ENCODE measurements at regions of chr18 and their contacts with region 1.

Region 1: DNA sequence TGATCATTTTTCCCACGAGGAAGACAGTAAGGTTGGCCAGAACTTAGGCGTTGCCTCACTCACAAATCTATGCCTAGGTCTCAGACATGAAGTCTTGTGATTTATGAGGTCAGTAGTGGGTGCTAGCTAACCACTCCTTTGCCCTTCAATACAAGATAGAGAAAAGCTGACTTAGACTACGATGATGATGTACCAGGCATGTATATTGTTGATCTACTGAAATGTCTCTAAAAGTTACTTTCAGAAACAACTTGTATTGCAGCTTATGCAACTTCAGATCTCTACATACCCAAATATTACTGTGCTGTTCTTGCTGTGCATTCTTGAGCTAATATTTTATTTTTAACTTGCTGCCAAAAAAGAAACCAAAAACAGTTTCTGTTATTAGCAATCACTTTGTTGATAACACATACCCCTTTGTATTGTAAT is 30.6 kb downstream of the MAPRE2 start:
- DNase-seq: no peak
- ATAC-seq: no peak
- H3K4me3 ChIP-seq: no peak overlapping the region
- H3K4me3 Mint-ChIP-seq: no peak overlapping the region
- H3K27ac ChIP-seq: peak overlapping the region in 1 of 2 donors; percentile 65
- H3K27ac Mint-ChIP-seq: peak overlapping the region; percentile 42
- H3K4me1 ChIP-seq: peaks cover 10 to 17% of the 10 kb centered on the region in 2 donors
- H3K4me1 Mint-ChIP-seq: peaks cover 53% of the 10 kb centered on the region
- H3K27me3 ChIP-seq: no peaks in the 10 kb centered on the region
- H3K27me3 Mint-ChIP-seq: no peaks in the 10 kb centered on the region
- CTCF ChIP-seq: no peak

Region 2: DNA sequence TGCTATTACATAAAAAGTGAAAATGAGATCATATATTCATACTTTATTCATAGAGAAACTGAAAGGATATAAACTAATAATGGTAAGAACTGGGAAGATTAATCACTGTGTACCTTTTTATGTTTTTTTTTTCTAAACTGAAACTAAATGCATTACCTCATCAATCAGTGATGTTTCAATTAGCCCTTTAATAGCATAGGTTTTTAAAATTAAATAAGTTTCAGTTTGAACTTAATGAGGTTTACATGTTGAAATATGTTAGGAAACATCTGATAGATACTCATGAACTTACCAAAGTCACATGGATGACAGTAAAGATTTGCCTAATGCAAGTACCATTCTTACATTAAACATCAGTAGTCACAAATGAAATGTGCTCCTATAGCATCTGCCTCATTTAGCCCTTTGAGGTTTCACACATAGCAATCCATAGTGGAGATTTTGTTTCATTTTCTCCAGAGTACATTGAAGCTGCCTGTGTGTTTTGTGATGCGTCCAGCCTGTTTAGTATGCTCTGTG is 21.7 kb before region 1 on chr18:
- CTCF ChIA-PET with region 1: no interaction called
- POLR2A ChIA-PET with region 1: no interaction called
- intact Hi-C with region 1: loop called (anchors 1 kb)
- DNase-seq: no peak
- ATAC-seq: peak; percentile 31
- H3K4me3 ChIP-seq: peak overlapping the region in 3 of 5 experiments; percentile 21 to 57 (median 27)
- H3K4me3 Mint-ChIP-seq: peak overlapping the region; percentile 83
- H3K27ac ChIP-seq: peak overlapping the region; percentile 85 to 87
- H3K27ac Mint-ChIP-seq: peak overlapping the region; percentile 88
- H3K4me1 ChIP-seq: peaks cover 50 to 55% of the 10 kb centered on the region in 2 donors
- H3K4me1 Mint-ChIP-seq: peaks cover 79% of the 10 kb centered on the region
- H3K27me3 ChIP-seq: no peaks in the 10 kb centered on the region
- H3K27me3 Mint-ChIP-seq: no peaks in the 10 kb centered on the region
- CTCF ChIP-seq: no peak

Region 3: DNA sequence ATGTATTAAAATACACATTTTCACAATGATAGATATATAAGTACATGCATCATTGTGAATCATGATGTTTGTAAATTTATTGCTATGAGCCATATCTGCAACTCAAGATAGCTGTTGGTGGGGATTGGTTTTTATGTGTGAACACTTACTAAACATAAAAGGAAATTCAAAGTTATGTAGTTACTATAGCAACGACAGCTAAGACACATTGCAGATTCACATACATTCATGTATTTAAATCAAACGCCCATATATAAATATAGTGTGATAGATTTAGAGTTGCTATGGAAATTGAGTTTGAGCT is 35.0 kb after region 1 on chr18:
- CTCF ChIA-PET with region 1: no interaction called
- POLR2A ChIA-PET with region 1: no interaction called
- intact Hi-C with region 1: loop called (anchors 5 kb)
- DNase-seq: no peak
- ATAC-seq: no peak
- H3K4me3 ChIP-seq: no peak overlapping the region
- H3K4me3 Mint-ChIP-seq: no peak overlapping the region
- H3K27ac ChIP-seq: peak overlapping the region in 1 of 2 donors; percentile 46
- H3K27ac Mint-ChIP-seq: no peak overlapping the region
- H3K4me1 ChIP-seq: peaks cover 0 to 19% of the 10 kb centered on the region in 2 donors
- H3K4me1 Mint-ChIP-seq: peaks cover 48% of the 10 kb centered on the region
- H3K27me3 ChIP-seq: no peaks in the 10 kb centered on the region
- H3K27me3 Mint-ChIP-seq: no peaks in the 10 kb centered on the region
- CTCF ChIP-seq: no peak

Region 4: DNA sequence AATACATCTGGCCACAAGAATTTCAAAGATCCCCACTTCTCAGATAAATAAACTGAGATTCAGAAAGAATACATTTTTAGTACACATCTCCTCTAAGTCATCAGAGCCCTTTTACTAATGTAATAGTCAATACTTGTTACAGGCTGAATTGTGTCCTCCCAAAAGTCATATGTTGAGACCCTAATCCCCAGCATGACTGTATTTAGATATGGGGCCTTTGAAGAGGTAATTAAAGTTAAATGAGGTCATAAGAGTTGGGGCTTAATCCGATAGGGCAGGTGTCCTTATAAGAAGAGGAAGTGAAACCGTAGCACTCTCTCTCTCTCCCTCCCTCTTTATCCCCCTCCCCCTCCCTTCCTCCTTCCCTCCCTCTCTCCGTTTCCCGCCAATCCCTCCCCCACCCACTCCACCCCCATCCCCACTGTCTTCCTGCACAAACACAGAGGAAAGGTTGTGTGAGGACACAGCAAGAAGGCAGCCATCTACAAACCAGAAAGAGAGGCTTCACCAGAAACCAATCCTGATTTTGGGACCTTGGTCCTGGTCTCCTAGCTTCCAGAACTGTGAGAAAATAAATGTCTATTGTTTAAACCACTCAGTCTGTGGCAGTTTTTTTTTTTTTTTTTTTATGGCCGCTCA is 102.4 kb after region 1 on chr18:
- CTCF ChIA-PET with region 1: no interaction called
- POLR2A ChIA-PET with region 1: no interaction called
- intact Hi-C with region 1: no loop called
- DNase-seq: peak; percentile 78
- ATAC-seq: peak; percentile 98
- H3K4me3 ChIP-seq: no peak overlapping the region
- H3K4me3 Mint-ChIP-seq: peak overlapping the region; percentile 59
- H3K27ac ChIP-seq: peak overlapping the region; percentile 37 to 69
- H3K27ac Mint-ChIP-seq: peak overlapping the region; percentile 77
- H3K4me1 ChIP-seq: peaks cover 14 to 23% of the 10 kb centered on the region in 2 donors
- H3K4me1 Mint-ChIP-seq: peaks cover 23% of the 10 kb centered on the region
- H3K27me3 ChIP-seq: no peaks in the 10 kb centered on the region
- H3K27me3 Mint-ChIP-seq: no peaks in the 10 kb centered on the region
- CTCF ChIP-seq: no peak

Region 5: GRCh38 chr18:35406666-35407065 is 334.8 kb after region 1 on chr18:
- CTCF ChIA-PET with region 1: no interaction called
- POLR2A ChIA-PET with region 1: no interaction called
- intact Hi-C with region 1: no loop called
- DNase-seq: no peak
- ATAC-seq: no peak
- H3K4me3 ChIP-seq: no peak overlapping the region
- H3K4me3 Mint-ChIP-seq: no peak overlapping the region
- H3K27ac ChIP-seq: no peak overlapping the region
- H3K27ac Mint-ChIP-seq: no peak overlapping the region
- H3K4me1 ChIP-seq: peaks cover 28 to 35% of the 10 kb centered on the region in 2 donors
- H3K4me1 Mint-ChIP-seq: peaks cover 30% of the 10 kb centered on the region
- H3K27me3 ChIP-seq: no peaks in the 10 kb centered on the region
- H3K27me3 Mint-ChIP-seq: no peaks in the 10 kb centered on the region
- CTCF ChIP-seq: no peak

Measured in B cell (primary cell).